PC-3 (cell line): ENCODE measurements at regions of chr12 and their contacts with region 1.

Region 1: DNA sequence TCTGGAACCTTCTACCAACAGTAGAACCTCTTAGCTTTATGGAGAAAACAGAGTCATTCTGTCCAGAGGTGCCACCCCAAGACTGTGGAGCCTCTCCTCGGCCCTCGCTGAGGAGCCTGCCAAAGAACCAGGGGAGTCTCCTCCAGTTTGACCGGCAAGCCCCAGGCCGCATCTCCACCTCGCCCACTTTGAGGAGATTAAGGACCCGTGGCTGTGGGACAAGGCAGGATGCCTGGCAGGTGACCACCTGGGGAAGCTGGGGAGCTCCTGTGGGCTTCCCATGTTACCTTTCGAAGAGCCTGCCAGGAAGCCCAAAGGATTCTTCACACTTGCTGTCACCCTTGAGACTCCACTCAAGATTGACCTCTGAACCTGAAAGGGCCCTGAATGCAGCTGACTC is 3.8 kb downstream of the PLEKHG7 start:
- DNase-seq: no peak
- ATAC-seq: no peak
- H3K4me3 ChIP-seq: no peak overlapping the region
- H3K27ac ChIP-seq: no peak overlapping the region
- H3K4me1 ChIP-seq: no peaks in the 10 kb centered on the region
- H3K27me3 ChIP-seq: no peaks in the 10 kb centered on the region
- CTCF ChIP-seq: no peak

Region 2: GRCh38 chr12:92786045-92786444 is 79.5 kb after region 1 on chr12:
- CTCF ChIA-PET with region 1: no interaction called
- POLR2A ChIA-PET with region 1: no interaction called
- intact Hi-C with region 1: no loop called
- DNase-seq: no peak
- ATAC-seq: no peak
- H3K4me3 ChIP-seq: no peak overlapping the region
- H3K27ac ChIP-seq: no peak overlapping the region
- H3K4me1 ChIP-seq: no peaks in the 10 kb centered on the region
- H3K27me3 ChIP-seq: no peaks in the 10 kb centered on the region
- CTCF ChIP-seq: no peak

Region 3: DNA sequence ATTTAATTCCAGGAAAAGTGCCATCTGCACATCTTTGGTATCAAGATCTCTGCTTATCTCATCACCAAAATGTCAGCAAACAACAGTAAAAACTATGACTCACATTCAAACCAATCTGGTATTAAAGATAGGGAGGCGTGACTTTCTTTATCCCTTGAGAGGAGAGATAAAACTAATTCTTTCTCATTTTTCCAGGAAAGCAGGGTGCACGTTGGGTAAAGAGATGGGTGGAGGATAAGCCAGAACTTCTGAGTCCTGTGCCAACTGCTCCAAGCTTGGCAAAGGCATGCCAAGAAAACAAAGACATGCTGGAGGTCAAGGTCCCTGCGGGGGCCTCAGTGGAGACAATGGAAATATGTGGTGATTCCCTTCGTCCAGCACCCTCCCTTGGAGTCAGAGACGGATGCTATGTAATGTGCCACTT is 1216.0 kb after region 1 on chr12:
- CTCF ChIA-PET with region 1: interaction called, 13 read pairs
- POLR2A ChIA-PET with region 1: no interaction called
- intact Hi-C with region 1: no loop called
- DNase-seq: no peak
- ATAC-seq: no peak
- H3K4me3 ChIP-seq: no peak overlapping the region
- H3K27ac ChIP-seq: no peak overlapping the region
- H3K4me1 ChIP-seq: peaks cover 7% of the 10 kb centered on the region
- H3K27me3 ChIP-seq: no peaks in the 10 kb centered on the region
- CTCF ChIP-seq: no peak